ENCODE measurements at regions of chr4 and their contacts with region 1.

Region 1: DNA sequence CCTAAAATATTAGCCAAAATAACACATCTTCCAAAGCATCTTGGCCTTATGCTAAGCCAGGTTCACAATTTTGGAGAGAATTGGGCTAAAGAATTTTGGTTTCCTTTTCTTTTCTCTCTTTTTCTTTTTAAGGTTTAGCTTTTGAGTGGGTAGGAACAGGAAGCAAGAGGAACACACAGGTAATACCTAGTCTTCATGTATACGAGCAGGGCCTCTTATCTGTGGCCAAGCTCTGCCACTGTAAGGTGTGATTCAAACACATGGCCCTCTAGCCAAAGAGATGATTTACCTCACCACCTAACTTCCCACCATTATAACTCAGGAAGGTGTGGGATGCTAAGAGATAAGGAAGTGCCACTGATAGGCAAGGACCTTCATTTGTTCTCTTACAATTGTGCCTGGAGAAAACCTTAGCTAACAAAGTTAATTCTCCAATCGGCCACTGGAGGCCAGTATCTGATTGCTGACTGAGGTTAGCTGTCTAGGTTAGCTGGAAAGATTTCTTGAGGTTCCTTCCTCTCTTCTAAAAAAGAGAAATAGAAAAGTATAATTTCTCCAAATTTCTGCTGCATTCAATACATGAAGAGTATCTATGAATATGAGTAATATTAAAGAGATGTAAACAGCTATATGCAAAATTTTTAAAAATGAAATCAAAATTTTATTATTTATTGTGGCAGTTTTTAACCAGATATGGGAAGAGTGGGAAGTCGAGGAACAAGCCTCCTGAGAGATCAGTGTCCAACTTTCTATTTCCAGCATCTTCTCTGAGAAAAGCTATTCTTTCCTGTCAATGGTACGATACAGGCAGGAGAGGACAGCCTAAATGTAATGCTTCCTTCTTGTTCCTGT is 30.1 kb upstream of the BBS7 start:
- DNase-seq: peak; percentile 4 to 75 (median 37)
- ATAC-seq: peak; percentile 90
- H3K4me3 ChIP-seq: no peak overlapping the region
- H3K4me3 Mint-ChIP-seq: no peak overlapping the region
- H3K27ac ChIP-seq: no peak overlapping the region
- H3K27ac Mint-ChIP-seq: no peak overlapping the region
- H3K4me1 ChIP-seq: no peaks in the 10 kb centered on the region
- H3K4me1 Mint-ChIP-seq: peaks cover 12% of the 10 kb centered on the region
- H3K27me3 ChIP-seq: peaks cover 0 to 14% of the 10 kb centered on the region in 2 experiments
- H3K27me3 Mint-ChIP-seq: peaks cover 8% of the 10 kb centered on the region
- CTCF ChIP-seq: peak; percentile 81

Region 2: GRCh38 chr4:122003335-122003734 is 103.0 kb after region 1 on chr4:
- CTCF ChIA-PET with region 1: interaction called, 5 read pairs
- POLR2A ChIA-PET with region 1: no interaction called
- intact Hi-C with region 1: loop called (anchors 1 to 10 kb)
- DNase-seq: peak in 6 of 14 experiments; percentile 2 to 67 (median 40)
- ATAC-seq: peak; percentile 43
- H3K4me3 ChIP-seq: no peak overlapping the region
- H3K4me3 Mint-ChIP-seq: no peak overlapping the region
- H3K27ac ChIP-seq: no peak overlapping the region
- H3K27ac Mint-ChIP-seq: no peak overlapping the region
- H3K4me1 ChIP-seq: no peaks in the 10 kb centered on the region
- H3K4me1 Mint-ChIP-seq: no peaks in the 10 kb centered on the region
- H3K27me3 ChIP-seq: peaks cover 0 to 7% of the 10 kb centered on the region in 2 experiments
- H3K27me3 Mint-ChIP-seq: peaks cover 35% of the 10 kb centered on the region
- CTCF ChIP-seq: no peak

Region 3: GRCh38 chr4:122218762-122219161 is 318.4 kb after region 1 on chr4:
- CTCF ChIA-PET with region 1: interaction called, 6 read pairs
- POLR2A ChIA-PET with region 1: interaction called, 3 read pairs
- intact Hi-C with region 1: loop called in 1 of 2 experiments (anchors 10 kb)
- DNase-seq: peak in 3 of 14 experiments; percentile 19 to 26 (median 24)
- ATAC-seq: peak; percentile 34
- H3K4me3 ChIP-seq: no peak overlapping the region
- H3K4me3 Mint-ChIP-seq: no peak overlapping the region
- H3K27ac ChIP-seq: no peak overlapping the region
- H3K27ac Mint-ChIP-seq: no peak overlapping the region
- H3K4me1 ChIP-seq: no peaks in the 10 kb centered on the region
- H3K4me1 Mint-ChIP-seq: peaks cover 44% of the 10 kb centered on the region
- H3K27me3 ChIP-seq: no peaks in the 10 kb centered on the region
- H3K27me3 Mint-ChIP-seq: no peaks in the 10 kb centered on the region
- CTCF ChIP-seq: peak; percentile 36

Region 4: DNA sequence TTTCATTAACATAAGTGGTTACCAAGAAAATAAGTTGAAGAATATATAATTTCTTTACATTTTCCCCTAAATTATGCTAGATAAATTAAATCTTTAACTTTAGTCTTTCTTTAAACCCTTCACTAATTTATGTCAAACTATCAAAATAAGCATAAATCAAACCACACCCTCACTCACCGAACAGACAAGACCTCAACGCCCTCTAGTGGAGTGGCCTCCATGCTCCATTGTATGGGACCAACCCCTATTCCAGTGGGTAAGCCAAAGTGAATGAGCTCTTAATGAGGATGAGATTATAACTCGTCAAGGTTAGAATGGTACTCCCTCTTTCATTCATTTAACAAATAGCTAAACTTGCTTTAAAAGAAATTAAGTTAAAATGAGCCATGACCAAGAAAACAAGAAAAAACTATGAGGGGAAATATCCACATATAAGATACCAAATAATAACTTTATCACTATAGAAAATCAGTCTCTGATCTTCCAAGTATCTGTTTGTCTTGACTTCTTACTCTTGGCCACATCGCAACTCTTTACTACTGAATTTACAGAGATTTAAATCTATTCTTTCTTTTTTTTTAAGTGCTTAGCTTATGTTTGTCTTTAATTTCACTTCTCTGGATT is 816.6 kb after region 1 on chr4:
- CTCF ChIA-PET with region 1: interaction called, 6 read pairs
- POLR2A ChIA-PET with region 1: no interaction called
- intact Hi-C with region 1: loop called (anchors 2 kb)
- DNase-seq: peak; percentile 50 to 82 (median 69)
- ATAC-seq: peak; percentile 96
- H3K4me3 ChIP-seq: no peak overlapping the region
- H3K4me3 Mint-ChIP-seq: no peak overlapping the region
- H3K27ac ChIP-seq: no peak overlapping the region
- H3K27ac Mint-ChIP-seq: no peak overlapping the region
- H3K4me1 ChIP-seq: no peaks in the 10 kb centered on the region
- H3K4me1 Mint-ChIP-seq: peaks cover 17% of the 10 kb centered on the region
- H3K27me3 ChIP-seq: no peaks in the 10 kb centered on the region
- H3K27me3 Mint-ChIP-seq: no peaks in the 10 kb centered on the region
- CTCF ChIP-seq: peak; percentile 83

Region 5: GRCh38 chr4:122914292-122914904 is 1014.0 kb after region 1 on chr4:
- CTCF ChIA-PET with region 1: interaction called, 3 read pairs
- POLR2A ChIA-PET with region 1: no interaction called
- intact Hi-C with region 1: loop called (anchors 5 kb)
- DNase-seq: peak in 3 of 14 experiments; percentile 6 to 61 (median 41)
- ATAC-seq: peak; percentile 75
- H3K4me3 ChIP-seq: no peak overlapping the region
- H3K4me3 Mint-ChIP-seq: no peak overlapping the region
- H3K27ac ChIP-seq: no peak overlapping the region
- H3K27ac Mint-ChIP-seq: no peak overlapping the region
- H3K4me1 ChIP-seq: no peaks in the 10 kb centered on the region
- H3K4me1 Mint-ChIP-seq: no peaks in the 10 kb centered on the region
- H3K27me3 ChIP-seq: no peaks in the 10 kb centered on the region
- H3K27me3 Mint-ChIP-seq: no peaks in the 10 kb centered on the region
- CTCF ChIP-seq: peak; percentile 76

Measured in CD4-positive, alpha-beta T cell (primary cell).